Adrenal gland (tissue), 19 donors: ENCODE measurements at regions of chr7 and their contacts with region 1.

Region 1: DNA sequence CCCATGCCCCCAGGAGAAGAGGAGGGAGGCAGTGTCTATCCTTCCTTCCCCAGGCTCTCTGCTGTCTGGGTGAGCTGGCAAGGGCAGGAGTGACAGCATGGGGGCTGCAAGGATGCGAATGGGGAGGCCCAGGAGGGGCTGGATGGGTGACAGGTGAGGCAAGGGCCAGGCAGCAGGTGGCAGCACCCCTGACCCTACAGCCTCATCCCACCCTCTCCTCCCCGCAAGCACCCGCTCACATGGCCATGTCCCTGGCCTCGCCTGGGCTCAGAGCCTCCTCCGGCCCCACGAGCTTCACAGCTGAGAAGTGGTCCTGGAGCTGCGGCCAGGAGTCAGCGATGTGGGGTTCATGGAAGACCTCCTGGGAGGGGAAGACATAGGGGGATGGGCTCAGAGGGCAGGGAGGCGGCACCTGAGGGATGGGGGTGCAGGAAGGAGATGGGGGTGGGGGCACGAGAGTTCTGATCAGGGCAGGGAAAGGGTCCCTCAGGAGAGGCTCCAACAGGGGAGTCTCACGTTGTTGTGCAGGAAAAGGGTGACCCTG is 5.3 kb downstream of the PLOD3 start:
- DNase-seq: no peak
- H3K4me3 ChIP-seq: no peak overlapping the region
- H3K27ac ChIP-seq: no peak overlapping the region
- H3K4me1 ChIP-seq: peaks cover 3 to 11% of the 10 kb centered on the region in 2 donors
- H3K27me3 ChIP-seq: no peaks in the 10 kb centered on the region
- CTCF ChIP-seq: no peak
- POLR2A ChIP-seq: no peak

Region 2: GRCh38 chr7:101244375-101245146 is 32.5 kb after region 1 on chr7 and contains the start of gene FIS1:
- intact Hi-C with region 1: loop called in 1 of 2 experiments (anchors 5 kb)
- DNase-seq: peak; percentile 90 to 96 (median 94)
- H3K4me3 ChIP-seq: peak within 1 kb of the TSS; percentile 79 to 100 (median 88)
- H3K27ac ChIP-seq: peak within 1 kb of the TSS; percentile 81 to 97 (median 94)
- H3K4me1 ChIP-seq: peaks cover 17 to 24% of the 10 kb centered on the region in 2 donors
- H3K27me3 ChIP-seq: no peaks in the 10 kb centered on the region
- CTCF ChIP-seq: peak in 5 of 6 experiments; percentile 77 to 95 (median 91)
- POLR2A ChIP-seq: peak; percentile 62 to 72
- total RNA-seq, gene FIS1: 216 to 439 (median 287) TPM

Region 3: DNA sequence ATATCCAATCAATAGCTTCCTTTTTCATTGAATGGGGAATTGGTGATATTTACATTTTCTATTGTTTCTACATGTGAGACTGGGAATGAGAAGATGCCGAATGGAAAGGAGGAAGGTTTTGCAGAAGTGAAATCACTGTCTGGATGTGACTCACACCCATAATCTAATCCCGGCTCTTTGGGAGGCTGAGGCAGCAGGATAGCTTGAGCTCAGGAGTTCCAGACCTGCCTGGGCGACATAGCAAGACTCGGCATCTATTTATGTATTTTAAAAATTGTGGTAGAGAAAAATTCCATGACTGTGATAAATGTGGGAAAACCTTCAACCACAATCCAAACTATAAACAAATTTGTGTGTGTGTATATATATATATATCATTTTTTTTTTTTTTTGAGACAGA is 43.7 kb after region 1 on chr7:
- intact Hi-C with region 1: no loop called
- DNase-seq: no peak
- H3K4me3 ChIP-seq: no peak overlapping the region
- H3K27ac ChIP-seq: no peak overlapping the region
- H3K4me1 ChIP-seq: peaks cover 8 to 9% of the 10 kb centered on the region in 2 donors
- H3K27me3 ChIP-seq: no peaks in the 10 kb centered on the region
- CTCF ChIP-seq: no peak
- POLR2A ChIP-seq: no peak